ENCODE measurements at regions of chr11 and their contacts with region 1.

Region 1: DNA sequence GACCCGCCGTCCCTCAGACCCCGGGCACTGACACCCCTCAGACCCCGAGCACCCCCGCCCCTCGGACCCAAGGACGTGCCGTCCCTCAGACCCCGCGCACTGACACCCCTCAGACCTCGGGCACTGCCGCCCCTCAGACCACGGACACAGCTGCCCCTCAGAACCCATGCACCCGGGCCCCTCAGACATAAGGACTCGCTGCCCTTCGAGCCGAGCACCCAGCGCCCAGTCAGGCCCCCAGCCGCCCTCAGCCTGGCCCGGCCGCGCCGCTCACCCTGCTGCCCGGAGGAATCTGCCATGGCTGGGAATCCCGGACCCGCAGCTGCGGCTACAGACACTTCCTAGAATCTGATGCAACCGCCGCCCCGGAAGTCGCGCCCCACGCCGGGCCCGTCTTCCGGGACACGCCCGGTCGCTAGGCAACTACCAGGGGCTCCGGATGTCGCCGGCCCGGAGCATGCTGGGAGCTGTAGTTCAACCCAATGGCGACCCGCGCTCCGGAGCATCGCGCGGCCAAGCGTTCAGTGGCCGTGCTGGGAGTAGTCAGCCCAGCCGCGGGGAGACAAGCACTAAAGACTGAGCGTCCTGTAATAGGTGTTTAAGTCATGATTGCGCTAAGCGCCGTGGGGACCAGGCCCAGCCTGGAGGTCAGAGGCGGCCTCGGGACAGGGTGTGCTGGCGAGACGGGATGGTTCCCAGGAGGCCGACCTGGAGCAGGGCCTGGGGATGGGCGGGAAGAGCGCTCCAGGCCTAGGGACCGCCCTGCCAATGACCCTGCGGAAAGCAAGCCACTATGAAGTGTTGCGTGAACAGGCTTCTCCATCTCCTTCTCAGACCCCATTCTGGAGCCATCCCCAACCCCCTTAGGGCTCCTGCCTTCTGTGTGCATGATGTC is at the start of gene CARS1:
- DNase-seq: peak; percentile 98
- H3K4me3 Mint-ChIP-seq: peak within 1 kb of the TSS; percentile 92
- H3K27ac Mint-ChIP-seq: peak within 1 kb of the TSS; percentile 88
- H3K4me1 Mint-ChIP-seq: peaks cover 32% of the 10 kb centered on the region
- H3K27me3 Mint-ChIP-seq: peaks cover 1% of the 10 kb centered on the region
- total RNA-seq, gene CARS1: 56.5 and 63.1 TPM in 2 replicates

Region 2: DNA sequence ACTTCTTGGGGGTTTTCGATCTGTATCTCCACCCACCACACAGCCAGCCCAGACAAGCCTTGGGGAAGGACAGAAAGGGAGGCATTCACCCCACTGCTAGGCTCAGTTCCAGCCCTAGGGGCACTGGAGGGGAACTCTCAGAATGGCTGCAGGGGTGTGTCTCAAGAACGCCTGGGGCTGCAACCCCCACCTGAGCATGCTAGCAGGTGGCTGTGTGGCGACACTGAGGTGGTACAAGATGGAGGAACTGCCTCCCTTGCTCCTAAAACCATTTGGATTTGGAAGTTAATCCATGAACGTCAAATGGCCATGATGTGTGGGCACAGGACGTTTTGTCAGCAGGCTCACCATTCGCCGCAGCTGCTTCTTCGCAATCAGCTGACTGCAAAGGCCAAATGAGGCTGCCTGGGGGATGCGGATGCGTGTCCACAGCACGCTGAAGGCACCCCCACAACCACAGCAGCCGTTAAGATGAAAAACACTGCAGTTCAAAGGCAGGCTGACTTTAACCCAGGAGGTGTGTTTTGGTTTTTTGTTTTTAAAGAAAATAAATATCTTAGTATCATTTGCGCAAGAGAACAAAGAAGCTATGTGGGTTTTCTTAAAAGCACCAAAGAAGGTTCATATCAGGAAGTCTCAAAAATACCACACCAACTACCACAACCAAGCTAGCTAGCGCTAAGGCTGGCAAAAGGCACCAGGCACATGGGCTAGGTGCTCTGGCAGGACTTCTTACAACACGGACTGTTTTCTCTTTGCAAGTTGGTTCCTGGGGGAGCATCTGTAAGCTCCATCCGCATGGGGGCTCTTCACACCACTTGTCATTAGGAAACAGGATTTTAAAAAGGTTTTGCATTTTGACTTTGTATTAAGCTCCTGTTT is 43.0 kb before region 1 on chr11:
- intact Hi-C with region 1: loop called (anchors 2 kb)
- DNase-seq: peak; percentile 94
- H3K4me3 Mint-ChIP-seq: peak overlapping the region; percentile 62
- H3K27ac Mint-ChIP-seq: peak overlapping the region; percentile 93
- H3K4me1 Mint-ChIP-seq: peaks cover 56% of the 10 kb centered on the region
- H3K27me3 Mint-ChIP-seq: no peaks in the 10 kb centered on the region

Region 3: GRCh38 chr11:3026803-3027202 is 30.5 kb before region 1 on chr11:
- intact Hi-C with region 1: no loop called
- DNase-seq: no peak
- H3K4me3 Mint-ChIP-seq: no peak overlapping the region
- H3K27ac Mint-ChIP-seq: no peak overlapping the region
- H3K4me1 Mint-ChIP-seq: peaks cover 32% of the 10 kb centered on the region
- H3K27me3 Mint-ChIP-seq: no peaks in the 10 kb centered on the region

Region 4: GRCh38 chr11:3164979-3165814 is 107.9 kb after region 1 on chr11 and contains the start of gene OSBPL5:
- intact Hi-C with region 1: loop called (anchors 5 kb)
- DNase-seq: peak; percentile 84
- H3K4me3 Mint-ChIP-seq: peak within 1 kb of the TSS; percentile 77
- H3K27ac Mint-ChIP-seq: no peak within 1 kb of the TSS
- H3K4me1 Mint-ChIP-seq: peaks cover 11% of the 10 kb centered on the region
- H3K27me3 Mint-ChIP-seq: peaks cover 53% of the 10 kb centered on the region
- total RNA-seq, gene OSBPL5: 2.3 and 3.4 TPM in 2 replicates